ENCODE measurements at regions of chr10 and their contacts with region 1.

Region 1: GRCh38 chr10:59006511-59007306 is 169.7 kb upstream of the PHYHIPL start:
- ATAC-seq: peak in 7 of 8 experiments; percentile 22 to 96 (median 56)
- H3K4me3 ChIP-seq: no peak overlapping the region
- H3K27ac ChIP-seq: no peak overlapping the region
- H3K4me1 ChIP-seq: peaks cover 10 to 22% of the 10 kb centered on the region in 2 donors

Region 2: DNA sequence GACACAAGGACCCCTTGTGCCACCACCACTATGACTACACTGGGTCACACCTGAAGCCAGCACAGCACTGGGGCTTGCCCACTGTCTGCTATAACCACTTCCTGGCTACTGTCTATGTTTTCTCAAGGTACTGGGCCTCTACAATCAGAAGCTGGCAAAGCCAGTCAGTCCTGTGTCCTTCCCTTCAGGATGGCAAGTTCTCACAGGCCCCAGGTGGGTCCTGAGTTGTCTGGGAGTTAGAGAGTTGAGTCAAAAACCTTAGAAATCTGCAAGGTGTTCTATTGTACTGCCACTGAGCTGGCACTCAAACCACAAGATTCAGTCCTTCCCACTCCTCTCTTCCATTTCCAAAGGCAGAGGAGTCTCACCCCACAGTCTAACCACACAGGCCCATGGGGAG is 1444.5 kb before region 1 on chr10:
- in situ Hi-C with region 1: no loop called
- ATAC-seq: no peak
- H3K4me3 ChIP-seq: no peak overlapping the region
- H3K27ac ChIP-seq: no peak overlapping the region
- H3K4me1 ChIP-seq: no peaks in the 10 kb centered on the region

Region 3: DNA sequence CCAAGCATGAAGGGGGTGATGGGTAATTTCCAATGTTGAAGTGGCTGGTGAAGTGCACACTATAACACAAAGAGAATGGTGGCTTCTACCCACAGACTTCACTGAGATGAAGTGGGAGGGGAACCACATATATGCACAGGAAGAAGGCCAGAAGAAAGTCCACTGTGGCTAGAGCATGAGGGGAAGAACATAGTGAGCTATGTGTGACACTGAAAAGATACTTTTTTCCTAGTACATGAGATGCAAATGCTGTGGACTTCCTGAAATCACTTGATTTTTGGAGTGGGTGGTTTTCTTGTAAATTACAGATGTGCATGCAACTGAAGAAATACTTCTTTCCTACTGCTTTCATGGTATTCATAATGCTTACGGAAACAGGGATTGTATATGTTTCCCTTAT is 54.1 kb after region 1 on chr10:
- in situ Hi-C with region 1: no loop called
- ATAC-seq: peak in 1 of 8 experiments; percentile 46
- H3K4me3 ChIP-seq: no peak overlapping the region
- H3K27ac ChIP-seq: no peak overlapping the region
- H3K4me1 ChIP-seq: peaks cover 9 to 18% of the 10 kb centered on the region in 2 donors

Region 4: GRCh38 chr10:59107147-59107546 is 100.4 kb after region 1 on chr10:
- in situ Hi-C with region 1: loop called in 1 of 9 experiments (anchors 25 kb)
- ATAC-seq: peak in 1 of 8 experiments; percentile 34
- H3K4me3 ChIP-seq: no peak overlapping the region
- H3K27ac ChIP-seq: no peak overlapping the region
- H3K4me1 ChIP-seq: peaks cover 2 to 9% of the 10 kb centered on the region in 2 donors

Region 5: DNA sequence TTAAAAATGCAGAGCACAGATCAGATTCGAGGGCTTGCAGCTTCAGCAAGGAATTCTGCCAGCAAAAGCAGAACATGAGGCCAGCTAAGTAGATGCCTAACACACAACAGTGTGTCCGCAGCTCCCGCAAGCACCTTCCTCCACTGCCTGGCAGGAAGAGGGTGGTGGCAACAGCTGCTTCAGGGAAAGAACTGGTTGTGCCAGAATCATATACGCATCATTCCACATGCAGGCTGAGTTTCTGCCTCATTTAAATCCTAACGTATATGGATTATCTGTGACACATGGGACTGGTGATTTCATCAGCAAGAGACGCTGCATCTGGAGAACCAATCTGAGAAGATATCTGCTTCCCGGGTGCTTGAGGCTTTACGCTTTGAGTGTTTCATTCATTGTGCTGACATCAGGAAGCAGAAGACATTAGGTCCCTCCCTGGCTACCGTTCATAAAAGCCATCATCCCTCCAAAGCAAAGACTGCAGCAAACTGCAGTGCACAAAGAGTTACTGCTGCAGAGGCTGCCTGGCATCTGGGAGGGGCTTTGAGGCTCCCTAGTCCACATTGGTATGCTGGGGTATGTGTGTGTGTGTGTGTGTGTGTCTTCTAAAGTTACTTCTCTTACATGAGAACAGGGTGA is 276.9 kb after region 1 on chr10:
- in situ Hi-C with region 1: no loop called
- ATAC-seq: peak in 7 of 8 experiments; percentile 68 to 85 (median 75)
- H3K4me3 ChIP-seq: peak overlapping the region in 4 of 5 donors; percentile 0 to 21 (median 10)
- H3K27ac ChIP-seq: peak overlapping the region; percentile 59 to 78
- H3K4me1 ChIP-seq: peaks cover 23 to 30% of the 10 kb centered on the region in 2 donors